AG04450 (cell line): ENCODE measurements at regions of chr3 and their contacts with region 1.

Region 1: GRCh38 chr3:9749645-9750555 is at the start of gene OGG1:
- DNase-seq: peak; percentile 96
- H3K4me3 ChIP-seq: peak within 1 kb of the TSS; percentile 86
- H3K27ac ChIP-seq: peak within 1 kb of the TSS; percentile 96
- H3K27me3 ChIP-seq: no peaks in the 10 kb centered on the region
- CTCF ChIP-seq: no peak
- polyA plus RNA-seq, gene OGG1: 23.5 and 26.5 TPM in 2 replicates

Region 2: GRCh38 chr3:9552252-9552999 is 197.5 kb before region 1 on chr3:
- CTCF ChIA-PET with region 1: no interaction called
- POLR2A ChIA-PET with region 1: no interaction called
- DNase-seq: peak; percentile 4
- H3K4me3 ChIP-seq: no peak overlapping the region
- H3K27ac ChIP-seq: no peak overlapping the region
- H3K27me3 ChIP-seq: peaks cover 9% of the 10 kb centered on the region
- CTCF ChIP-seq: no peak

Region 3: GRCh38 chr3:9731206-9732079 is 18.5 kb before region 1 on chr3 and contains the start of gene BRPF1:
- CTCF ChIA-PET with region 1: no interaction called
- POLR2A ChIA-PET with region 1: interaction called, 14 read pairs
- DNase-seq: peak; percentile 99
- H3K4me3 ChIP-seq: peak within 1 kb of the TSS; percentile 92
- H3K27ac ChIP-seq: peak within 1 kb of the TSS; percentile 99
- H3K27me3 ChIP-seq: no peaks in the 10 kb centered on the region
- CTCF ChIP-seq: no peak
- polyA plus RNA-seq, gene BRPF1: 5.7 and 8.3 TPM in 2 replicates

Region 4: DNA sequence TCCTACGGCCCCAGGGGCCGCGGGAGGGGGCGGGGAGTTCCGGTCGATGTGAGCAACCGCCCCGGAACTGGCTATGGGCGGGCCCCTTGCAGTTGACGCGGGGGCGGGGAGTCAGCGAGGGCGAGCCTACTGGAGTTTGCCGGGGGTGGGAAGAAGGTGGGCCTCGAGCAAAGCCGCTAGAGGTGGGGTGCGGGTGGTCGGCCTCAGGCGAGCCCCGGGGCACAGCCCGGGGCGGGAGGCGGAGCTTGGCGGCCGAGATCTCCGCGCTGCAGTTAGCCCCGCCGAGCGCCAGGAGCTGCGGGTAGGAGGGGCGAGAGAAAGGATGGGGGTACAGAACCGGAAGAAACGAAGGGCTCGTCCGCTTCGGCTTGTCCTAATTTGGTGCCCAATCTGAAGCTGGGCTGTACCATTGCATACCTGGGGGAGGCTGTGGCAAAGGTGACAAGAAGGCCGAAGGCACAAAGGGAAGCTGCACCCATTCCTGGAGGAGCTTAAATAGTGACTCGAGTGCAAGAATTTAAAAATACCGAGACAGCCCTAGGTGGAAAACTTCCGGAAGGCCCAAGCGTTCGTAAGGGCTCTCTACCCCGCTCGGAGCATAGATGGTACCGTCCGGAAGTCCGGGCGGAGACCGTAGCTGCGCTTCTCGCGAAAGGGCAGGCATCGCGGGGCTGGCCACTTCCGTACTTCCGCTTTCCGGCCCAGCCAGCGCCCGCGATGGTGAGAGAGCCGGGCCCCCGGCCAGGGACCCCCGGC is 42.7 kb after region 1 on chr3 and contains the starts of genes ARPC4 and TADA3:
- CTCF ChIA-PET with region 1: no interaction called
- POLR2A ChIA-PET with region 1: interaction called, 13 read pairs
- DNase-seq: peak; percentile 96
- H3K4me3 ChIP-seq: peak within 1 kb of the TSS; percentile 99
- H3K27ac ChIP-seq: peak within 1 kb of the TSS; percentile 93
- H3K27me3 ChIP-seq: no peaks in the 10 kb centered on the region
- CTCF ChIP-seq: no peak
- polyA plus RNA-seq, gene ARPC4: 199 and 200 TPM in 2 replicates
- polyA plus RNA-seq, gene TADA3: 61.8 and 83.7 TPM in 2 replicates

Region 5: DNA sequence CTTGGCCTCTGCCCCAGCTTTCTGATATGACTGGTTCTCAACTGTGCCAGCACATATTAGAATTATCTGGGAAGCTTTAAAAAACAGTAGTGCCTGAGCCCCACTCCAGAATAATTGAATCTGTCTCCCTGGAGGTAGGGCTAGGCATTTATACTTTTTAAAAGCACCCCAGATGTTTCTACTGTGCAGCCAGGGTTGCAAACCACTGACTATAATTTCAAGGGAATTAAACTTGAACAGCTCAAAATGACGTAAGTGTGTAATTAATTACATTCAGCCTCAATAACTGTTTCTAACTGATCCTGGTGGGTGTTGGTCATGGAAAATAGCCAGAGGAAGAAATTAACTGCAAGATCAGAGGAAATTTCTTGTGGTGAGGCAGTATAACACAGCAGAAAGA is 410.4 kb after region 1 on chr3:
- CTCF ChIA-PET with region 1: no interaction called
- POLR2A ChIA-PET with region 1: no interaction called
- DNase-seq: no peak
- H3K4me3 ChIP-seq: no peak overlapping the region
- H3K27ac ChIP-seq: no peak overlapping the region
- H3K27me3 ChIP-seq: no peaks in the 10 kb centered on the region
- CTCF ChIP-seq: no peak